Testis (tissue), 5 donors: ENCODE measurements at regions of chr6 and their contacts with region 1.

Region 1: DNA sequence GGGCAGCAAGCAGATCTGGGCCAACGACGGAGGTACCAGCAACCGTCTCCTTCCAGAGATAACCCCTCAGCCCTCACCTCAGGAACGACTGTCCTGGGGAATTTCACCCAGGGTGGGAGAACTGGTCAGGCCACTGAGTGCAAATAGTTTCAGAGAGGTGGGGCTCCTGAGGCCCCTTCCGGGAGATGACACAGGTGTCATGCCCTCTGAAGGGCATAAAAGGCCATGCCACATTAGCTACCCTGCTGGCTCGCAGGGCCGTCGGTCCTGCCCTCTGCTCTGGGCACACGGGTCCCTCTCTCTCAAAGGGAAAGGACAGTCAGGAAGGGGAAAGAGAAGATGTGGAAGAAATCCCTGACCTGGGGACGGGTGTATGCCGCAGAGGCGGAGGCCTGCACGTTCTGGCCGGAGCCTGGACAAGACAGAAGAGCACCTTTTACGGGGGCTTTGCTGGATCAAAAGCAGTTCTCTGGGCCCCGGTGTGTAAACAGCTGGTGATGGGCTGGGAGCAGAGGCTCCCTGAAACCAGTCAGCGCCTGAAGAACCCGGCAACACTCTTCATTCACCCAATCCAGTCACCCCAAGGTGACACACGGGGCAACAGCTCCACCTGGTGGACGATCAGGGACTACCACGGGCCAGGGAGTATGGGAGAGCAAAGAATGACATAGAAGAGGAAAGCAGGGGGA is 6.4 kb upstream of the TAF8 start:
- DNase-seq: peak; percentile 88
- H3K4me3 ChIP-seq: no peak overlapping the region
- H3K27ac ChIP-seq: peak overlapping the region; percentile 68 to 95
- H3K4me1 ChIP-seq: peaks cover 60% of the 10 kb centered on the region
- H3K27me3 ChIP-seq: no peaks in the 10 kb centered on the region
- CTCF ChIP-seq: peak; percentile 95 to 97 (median 97)
- POLR2A ChIP-seq: no peak

Region 2: GRCh38 chr6:41787219-41787917 is 256.6 kb before region 1 on chr6 and contains the start of gene TOMM6:
- intact Hi-C with region 1: loop called (anchors 5 kb)
- DNase-seq: peak; percentile 97
- H3K4me3 ChIP-seq: peak within 1 kb of the TSS; percentile 90 to 96
- H3K27ac ChIP-seq: peak within 1 kb of the TSS; percentile 57 to 94
- H3K4me1 ChIP-seq: peaks cover 8% of the 10 kb centered on the region
- H3K27me3 ChIP-seq: no peaks in the 10 kb centered on the region
- CTCF ChIP-seq: peak; percentile 83 to 97 (median 95)
- POLR2A ChIP-seq: peak; percentile 44
- total RNA-seq, gene TOMM6: 168 to 172 TPM

Region 3: DNA sequence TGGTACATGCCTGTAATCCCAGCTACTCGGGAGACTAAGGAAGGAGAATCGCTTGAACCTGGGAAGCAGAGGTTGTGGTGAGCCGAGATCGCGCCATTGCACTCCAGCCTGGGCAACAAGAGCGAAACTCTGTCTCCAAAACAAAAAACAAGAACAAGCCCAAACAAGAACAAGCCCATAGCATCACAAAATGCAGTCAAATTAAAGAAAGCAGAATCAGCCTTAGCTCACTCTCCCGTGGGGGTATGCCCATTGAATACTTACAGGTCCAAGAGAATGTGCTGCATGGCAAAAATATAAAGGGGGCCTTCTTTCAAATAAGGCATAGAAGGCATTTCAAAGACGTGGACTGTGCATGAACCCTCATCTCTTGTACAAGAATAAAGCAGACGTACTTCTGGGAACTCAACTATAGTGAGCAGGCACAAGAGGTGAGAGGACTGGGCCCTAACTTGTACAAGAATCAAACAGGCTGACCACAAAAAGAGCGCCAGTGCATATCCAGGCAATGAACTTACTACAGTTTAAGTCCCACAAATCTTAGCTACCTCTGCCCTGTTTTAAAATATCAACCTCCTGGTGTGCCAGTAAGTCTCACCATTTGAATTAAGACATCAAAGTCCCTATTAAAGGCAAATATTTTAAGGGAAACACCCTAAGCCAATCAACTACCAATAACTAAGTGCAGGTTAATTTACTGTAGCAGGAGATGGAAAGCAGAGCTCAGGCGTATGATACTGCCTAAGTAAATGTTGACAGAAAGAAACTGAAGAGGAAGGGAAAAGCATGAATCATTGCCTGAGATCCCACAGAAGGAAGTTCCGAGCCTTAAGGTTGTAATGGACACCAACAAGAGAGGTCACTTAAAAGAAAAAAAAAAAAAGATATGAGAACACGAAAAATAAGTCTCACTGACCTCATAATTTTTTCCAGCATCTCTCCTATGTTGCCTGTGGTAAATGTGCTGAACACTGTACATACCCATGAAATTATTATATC is 219.1 kb before region 1 on chr6:
- intact Hi-C with region 1: no loop called
- DNase-seq: no peak
- H3K4me3 ChIP-seq: no peak overlapping the region
- H3K27ac ChIP-seq: no peak overlapping the region
- H3K4me1 ChIP-seq: no peaks in the 10 kb centered on the region
- H3K27me3 ChIP-seq: no peaks in the 10 kb centered on the region
- CTCF ChIP-seq: no peak
- POLR2A ChIP-seq: no peak

Region 4: GRCh38 chr6:41936073-41936837 is 107.7 kb before region 1 on chr6:
- intact Hi-C with region 1: loop called (anchors 5 kb)
- DNase-seq: peak; percentile 80
- H3K4me3 ChIP-seq: no peak overlapping the region
- H3K27ac ChIP-seq: no peak overlapping the region
- H3K4me1 ChIP-seq: peaks cover 31% of the 10 kb centered on the region
- H3K27me3 ChIP-seq: no peaks in the 10 kb centered on the region
- CTCF ChIP-seq: peak; percentile 62 to 72 (median 69)
- POLR2A ChIP-seq: no peak

Region 5: GRCh38 chr6:41970436-41970846 is 73.5 kb before region 1 on chr6:
- intact Hi-C with region 1: no loop called
- DNase-seq: no peak
- H3K4me3 ChIP-seq: no peak overlapping the region
- H3K27ac ChIP-seq: no peak overlapping the region
- H3K4me1 ChIP-seq: peaks cover 4% of the 10 kb centered on the region
- H3K27me3 ChIP-seq: no peaks in the 10 kb centered on the region
- CTCF ChIP-seq: no peak
- POLR2A ChIP-seq: no peak

Region 6: GRCh38 chr6:43883847-43884651 is 1840.1 kb after region 1 on chr6:
- intact Hi-C with region 1: no loop called
- DNase-seq: no peak
- H3K4me3 ChIP-seq: no peak overlapping the region
- H3K27ac ChIP-seq: no peak overlapping the region
- H3K4me1 ChIP-seq: no peaks in the 10 kb centered on the region
- H3K27me3 ChIP-seq: no peaks in the 10 kb centered on the region
- CTCF ChIP-seq: no peak
- POLR2A ChIP-seq: no peak